ENCODE measurements at regions of chr11 and their contacts with region 1.

Region 1: DNA sequence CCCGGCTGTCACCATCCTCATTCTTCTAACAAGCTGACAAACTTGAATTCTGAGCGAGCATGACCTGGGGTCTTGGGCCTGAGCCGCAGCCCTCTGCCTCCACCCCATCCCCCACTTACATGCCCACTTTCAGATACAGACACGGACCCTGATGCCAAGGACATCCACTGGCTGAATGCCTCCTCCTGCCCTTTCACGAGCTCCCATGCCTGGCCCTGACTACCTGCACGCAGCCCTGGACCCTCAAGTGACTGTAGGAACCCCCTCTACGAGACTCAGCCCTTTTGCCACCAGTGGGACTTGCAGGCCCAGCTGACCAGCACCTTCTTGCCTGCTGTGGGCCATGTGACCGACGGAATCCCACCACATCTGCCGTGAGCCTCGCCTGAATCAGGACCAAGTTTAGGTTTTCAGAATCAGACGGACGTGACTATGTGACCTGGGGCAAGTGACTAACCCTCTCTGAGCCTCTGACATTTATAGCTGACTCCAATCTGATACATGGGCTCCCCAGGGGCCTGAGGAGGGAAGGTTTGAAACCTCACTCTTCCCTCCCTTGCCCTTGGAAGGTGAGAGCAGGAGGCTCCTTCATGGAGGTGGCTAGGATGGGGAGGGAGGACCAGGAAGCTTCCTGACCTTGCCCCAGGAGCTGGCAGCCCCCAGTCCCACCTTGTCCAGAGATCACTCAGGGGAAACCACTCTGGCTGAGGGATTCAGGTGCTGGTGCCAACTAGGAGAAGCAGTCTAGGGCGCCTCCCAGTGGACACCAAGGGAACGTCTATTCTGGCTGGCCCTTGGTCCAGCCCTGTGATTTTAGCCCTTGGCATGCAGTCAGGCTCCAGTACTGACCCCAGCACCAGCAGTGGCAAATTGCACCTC is 46.9 kb upstream of the SYT7 start:
- DNase-seq: peak; percentile 65 to 67
- ATAC-seq: peak; percentile 81 to 95
- H3K4me3 ChIP-seq: no peak overlapping the region
- H3K27ac ChIP-seq: no peak overlapping the region
- H3K4me1 ChIP-seq: no peaks in the 10 kb centered on the region
- CTCF ChIP-seq: peak; percentile 75
- EP300 ChIP-seq: no peak
- POLR2A ChIP-seq: no peak
- RAD21 ChIP-seq: peak; percentile 68 to 72

Region 2: GRCh38 chr11:61254403-61255025 is 373.3 kb before region 1 on chr11:
- CTCF ChIA-PET with region 1: no interaction called
- POLR2A ChIA-PET with region 1: no interaction called
- DNase-seq: peak; percentile 70 to 85
- ATAC-seq: peak; percentile 87 to 97
- H3K4me3 ChIP-seq: no peak overlapping the region
- H3K27ac ChIP-seq: no peak overlapping the region
- H3K4me1 ChIP-seq: no peaks in the 10 kb centered on the region
- CTCF ChIP-seq: peak; percentile 78
- EP300 ChIP-seq: no peak
- POLR2A ChIP-seq: no peak
- RAD21 ChIP-seq: peak; percentile 71 to 80

Region 3: DNA sequence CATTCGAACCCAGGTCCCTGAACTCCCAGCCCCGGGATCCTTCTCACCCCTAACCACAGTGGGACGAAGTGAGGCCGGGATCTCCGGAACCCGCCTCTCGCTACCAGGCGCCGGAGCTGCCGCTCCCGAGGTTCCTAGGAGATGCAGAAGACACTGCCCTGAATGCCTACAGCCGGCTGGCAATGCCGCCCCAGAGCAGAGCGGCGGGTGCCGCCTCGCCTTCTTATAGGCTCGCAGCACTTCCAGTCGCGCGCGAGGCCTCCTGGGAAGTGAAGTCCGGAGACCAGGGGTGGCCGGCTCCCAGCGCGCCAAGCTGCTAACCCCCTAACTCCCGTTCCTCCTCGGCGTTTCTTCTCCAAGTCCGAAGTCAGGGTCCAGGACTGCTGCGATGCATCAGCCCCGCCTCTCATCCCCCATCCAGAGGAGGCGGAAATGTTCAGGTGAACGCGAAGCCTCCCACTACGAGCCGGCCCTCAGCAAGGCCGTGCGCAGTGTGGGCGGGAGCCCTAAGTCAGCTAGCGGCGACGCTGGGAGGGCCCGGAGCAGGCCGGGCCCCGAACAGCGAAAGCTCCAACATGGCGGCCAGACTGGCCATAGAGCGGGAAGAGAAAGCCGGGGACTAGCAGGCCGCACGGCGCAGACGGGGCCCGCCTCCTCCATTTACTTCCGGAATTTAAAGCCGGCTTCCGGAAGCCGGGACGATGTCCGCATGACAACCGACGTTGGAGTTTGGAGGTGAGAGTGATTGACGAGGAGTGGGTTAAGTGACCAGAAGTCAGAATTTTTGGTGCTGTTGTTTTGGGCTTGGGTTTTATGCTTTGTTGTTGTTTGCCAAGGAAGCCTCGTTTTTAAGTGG is 265.9 kb before region 1 on chr11 and contains the starts of genes CYB561A3 and TMEM138:
- CTCF ChIA-PET with region 1: no interaction called
- POLR2A ChIA-PET with region 1: no interaction called
- DNase-seq: peak; percentile 95 to 96
- ATAC-seq: peak; percentile 98
- H3K4me3 ChIP-seq: peak within 1 kb of the TSS; percentile 82
- H3K27ac ChIP-seq: peak within 1 kb of the TSS; percentile 96 to 97
- H3K4me1 ChIP-seq: peaks cover 15% of the 10 kb centered on the region; the same call in 2 of the 3 replicates
- CTCF ChIP-seq: no peak
- EP300 ChIP-seq: no peak
- POLR2A ChIP-seq: peak; percentile 94
- RAD21 ChIP-seq: no peak
- polyA plus RNA-seq, gene CYB561A3: 50.8 and 58.1 TPM in 2 replicates
- polyA plus RNA-seq, gene TMEM138: 143 and 156 TPM in 2 replicates

Region 4: GRCh38 chr11:61446211-61446651 is 181.6 kb before region 1 on chr11:
- CTCF ChIA-PET with region 1: interaction called, 33 read pairs
- POLR2A ChIA-PET with region 1: no interaction called
- DNase-seq: peak; percentile 90
- ATAC-seq: peak; percentile 98 to 99
- H3K4me3 ChIP-seq: no peak overlapping the region
- H3K27ac ChIP-seq: peak overlapping the region; percentile 44 to 79; a peak in 5 of 6 replicates
- H3K4me1 ChIP-seq: peaks cover 12% of the 10 kb centered on the region
- CTCF ChIP-seq: peak; percentile 91
- EP300 ChIP-seq: no peak
- POLR2A ChIP-seq: no peak
- RAD21 ChIP-seq: peak; percentile 71 to 77

Region 5: GRCh38 chr11:61609980-61610366 is 17.8 kb before region 1 on chr11:
- CTCF ChIA-PET with region 1: interaction called, 18 read pairs
- POLR2A ChIA-PET with region 1: no interaction called
- DNase-seq: peak in 1 of 2 experiments; percentile 35
- ATAC-seq: peak; percentile 54 to 76; a peak in 5 of 6 replicates
- H3K4me3 ChIP-seq: no peak overlapping the region
- H3K27ac ChIP-seq: no peak overlapping the region
- H3K4me1 ChIP-seq: no peaks in the 10 kb centered on the region
- CTCF ChIP-seq: no peak
- EP300 ChIP-seq: no peak
- POLR2A ChIP-seq: no peak
- RAD21 ChIP-seq: no peak

Region 6: DNA sequence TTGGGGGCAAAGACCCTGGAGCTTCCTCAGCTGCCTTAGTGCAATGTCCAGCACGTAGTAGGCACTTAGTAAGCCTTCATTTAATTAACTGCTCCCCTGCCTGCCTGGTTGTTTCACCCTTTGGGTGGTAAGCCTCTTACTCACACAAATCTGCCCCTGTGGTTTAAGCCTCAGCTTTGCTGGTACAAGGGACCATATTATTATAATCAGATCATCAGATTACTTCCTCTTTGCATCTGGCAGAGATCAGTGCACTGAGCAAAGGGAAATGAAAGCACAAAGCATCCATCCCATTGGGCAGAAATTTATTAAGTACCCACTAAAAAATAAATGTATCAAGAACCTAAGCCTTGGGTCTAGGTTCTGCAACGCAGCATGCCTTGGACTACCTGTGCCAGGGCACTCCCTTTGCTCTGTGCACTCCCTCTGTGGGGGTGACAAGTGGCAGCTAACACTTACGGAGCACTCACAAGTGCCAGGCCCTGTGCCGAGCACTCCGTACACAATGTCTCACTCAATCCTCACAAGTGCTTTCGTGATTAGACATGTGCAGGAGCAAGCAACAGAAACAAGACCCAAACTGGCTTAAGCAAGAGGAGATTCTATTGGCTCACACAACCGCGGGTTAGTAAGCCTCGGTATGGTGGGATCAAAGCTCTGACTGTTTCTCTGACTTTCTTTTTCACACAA is 17.5 kb after region 1 on chr11:
- CTCF ChIA-PET with region 1: interaction called, 59 read pairs
- POLR2A ChIA-PET with region 1: no interaction called
- DNase-seq: no peak
- ATAC-seq: peak; percentile 30 to 31; a peak in 2 of 6 replicates
- H3K4me3 ChIP-seq: no peak overlapping the region
- H3K27ac ChIP-seq: no peak overlapping the region
- H3K4me1 ChIP-seq: no peaks in the 10 kb centered on the region
- CTCF ChIP-seq: no peak
- EP300 ChIP-seq: no peak
- POLR2A ChIP-seq: no peak
- RAD21 ChIP-seq: no peak

Region 7: GRCh38 chr11:61764606-61765260 is 136.9 kb after region 1 on chr11:
- CTCF ChIA-PET with region 1: no interaction called
- POLR2A ChIA-PET with region 1: no interaction called
- DNase-seq: no peak
- ATAC-seq: peak; percentile 7 to 33; a peak in 4 of 6 replicates
- H3K4me3 ChIP-seq: no peak overlapping the region
- H3K27ac ChIP-seq: peak overlapping the region in 1 of 2 experiments; percentile 74; a peak in 4 of 6 replicates
- H3K4me1 ChIP-seq: peaks cover 68% of the 10 kb centered on the region
- CTCF ChIP-seq: no peak
- EP300 ChIP-seq: no peak
- POLR2A ChIP-seq: no peak
- RAD21 ChIP-seq: no peak